ENCODE measurements at regions of chr17 and their contacts with region 1.

Region 1: DNA sequence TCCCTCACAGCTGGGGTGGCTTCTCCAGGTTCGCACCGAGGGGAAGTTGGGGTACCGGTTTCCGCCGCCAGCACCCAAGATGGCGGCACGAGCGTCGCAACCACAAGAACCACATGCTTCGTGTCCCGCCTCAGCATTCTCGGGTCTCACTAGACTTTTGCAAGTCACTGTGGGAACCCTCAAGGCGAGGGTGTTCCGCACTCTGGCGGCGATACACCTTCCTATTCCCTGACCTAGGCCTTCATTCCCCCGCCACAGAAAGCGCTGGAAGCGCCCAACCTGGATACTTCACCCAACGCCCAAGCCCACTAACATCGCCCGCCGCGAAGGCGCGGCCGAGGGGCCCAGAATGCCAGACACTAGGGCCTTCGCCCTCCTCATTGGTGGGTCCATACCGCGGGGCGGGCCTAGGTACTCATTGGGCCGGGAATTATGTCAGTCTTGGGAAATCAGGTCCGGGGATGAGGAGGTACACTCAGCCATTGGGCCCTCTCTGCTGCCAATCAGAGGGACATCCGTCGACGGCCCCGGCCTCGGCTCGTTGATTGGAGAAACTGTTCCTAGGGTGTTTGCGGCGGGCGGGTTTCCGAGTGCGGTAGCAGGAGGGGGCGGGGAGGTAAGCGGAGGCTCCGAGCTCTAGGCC is at the start of gene NFE2L1:
- DNase-seq: peak; percentile 100
- H3K4me3 ChIP-seq: peak within 1 kb of the TSS; percentile 84
- H3K4me3 Mint-ChIP-seq: peak within 1 kb of the TSS; percentile 87
- H3K27ac Mint-ChIP-seq: peak within 1 kb of the TSS; percentile 100
- H3K4me1 ChIP-seq: peaks cover 22% of the 10 kb centered on the region
- H3K4me1 Mint-ChIP-seq: peaks cover 30% of the 10 kb centered on the region
- H3K27me3 ChIP-seq: no peaks in the 10 kb centered on the region
- H3K27me3 Mint-ChIP-seq: no peaks in the 10 kb centered on the region
- CTCF ChIP-seq: no peak
- total RNA-seq, gene NFE2L1: 322 and 356 TPM in 2 replicates

Region 2: GRCh38 chr17:47821424-47822391 is 226.2 kb before region 1 on chr17 and contains the start of gene OSBPL7:
- CTCF ChIA-PET with region 1: no interaction called
- POLR2A ChIA-PET with region 1: no interaction called
- intact Hi-C with region 1: no loop called
- DNase-seq: peak; percentile 92 to 95
- H3K4me3 ChIP-seq: peak within 1 kb of the TSS; percentile 75
- H3K4me3 Mint-ChIP-seq: peak within 1 kb of the TSS; percentile 98
- H3K27ac Mint-ChIP-seq: peak within 1 kb of the TSS; percentile 92
- H3K4me1 ChIP-seq: peaks cover 9% of the 10 kb centered on the region
- H3K4me1 Mint-ChIP-seq: peaks cover 18% of the 10 kb centered on the region
- H3K27me3 ChIP-seq: no peaks in the 10 kb centered on the region
- H3K27me3 Mint-ChIP-seq: no peaks in the 10 kb centered on the region
- CTCF ChIP-seq: peak in 1 of 2 experiments; percentile 86
- total RNA-seq, gene OSBPL7: 46.8 and 48.3 TPM in 2 replicates

Region 3: DNA sequence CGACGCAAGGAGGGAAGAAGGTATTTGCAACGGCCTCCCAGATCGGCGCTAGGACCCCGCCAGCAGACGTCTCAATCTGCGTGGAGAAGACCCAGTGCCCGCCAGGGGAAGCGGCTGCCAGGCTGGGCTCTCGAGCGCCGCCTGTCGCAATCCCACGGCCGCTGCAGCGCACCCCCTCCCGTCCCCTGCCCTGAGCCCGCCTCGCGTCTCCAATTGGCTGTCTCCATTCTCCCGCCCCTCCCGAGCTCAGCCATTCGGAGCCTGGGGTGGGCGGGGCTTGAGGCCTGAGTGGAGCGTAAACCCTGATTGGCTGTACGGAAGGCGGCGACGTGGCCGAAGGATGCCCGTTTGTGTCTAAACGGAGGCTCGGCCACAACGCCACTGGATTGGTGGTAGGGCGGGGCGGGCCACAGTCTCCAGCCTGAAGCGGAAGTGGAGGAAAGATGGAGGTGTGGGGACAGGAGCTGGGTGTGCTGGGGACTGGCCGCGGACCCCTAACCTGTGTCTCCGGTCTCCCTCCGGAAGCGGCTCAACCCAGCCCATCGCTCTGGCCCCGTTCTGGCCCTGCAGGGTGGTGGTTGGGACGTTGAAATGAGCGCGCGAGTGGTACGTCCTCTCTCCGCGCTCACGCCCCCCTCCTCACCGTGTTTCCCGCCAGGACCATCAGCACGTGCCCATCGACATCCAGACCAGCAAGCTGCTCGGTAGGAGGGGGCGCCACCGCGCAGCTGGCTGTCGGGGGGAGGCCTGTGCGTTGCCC is 77.0 kb before region 1 on chr17 and contains the start of gene CDK5RAP3:
- CTCF ChIA-PET with region 1: interaction called, 21 read pairs
- POLR2A ChIA-PET with region 1: interaction called, 37 read pairs
- intact Hi-C with region 1: loop called (anchors 2 kb)
- DNase-seq: peak; percentile 100
- H3K4me3 ChIP-seq: peak within 1 kb of the TSS; percentile 72
- H3K4me3 Mint-ChIP-seq: peak within 1 kb of the TSS; percentile 94
- H3K27ac Mint-ChIP-seq: peak within 1 kb of the TSS; percentile 92
- H3K4me1 ChIP-seq: peaks cover 40% of the 10 kb centered on the region
- H3K4me1 Mint-ChIP-seq: peaks cover 30% of the 10 kb centered on the region
- H3K27me3 ChIP-seq: no peaks in the 10 kb centered on the region
- H3K27me3 Mint-ChIP-seq: no peaks in the 10 kb centered on the region
- CTCF ChIP-seq: peak; percentile 99 to 100
- total RNA-seq, gene CDK5RAP3: 425 and 427 TPM in 2 replicates

Region 4: DNA sequence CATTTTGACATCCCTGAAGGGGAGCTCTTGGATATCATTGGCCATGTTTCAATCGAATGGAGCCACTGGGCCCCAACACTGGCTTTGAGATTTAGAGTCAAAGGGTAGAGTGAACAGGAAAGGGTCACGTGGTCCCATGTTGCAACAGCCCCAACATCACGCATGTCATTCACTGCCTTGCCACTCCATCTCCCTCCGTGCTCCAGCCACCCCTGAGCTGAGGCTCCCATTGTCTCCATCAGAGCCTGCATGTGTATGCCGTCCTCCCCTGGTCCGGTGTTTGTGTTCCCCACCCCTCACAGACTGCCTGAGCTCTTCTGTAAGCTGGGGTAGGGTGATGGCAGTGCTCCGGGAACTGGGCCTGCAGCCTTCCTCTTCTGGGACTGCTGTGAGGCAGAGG is 12.4 kb after region 1 on chr17:
- CTCF ChIA-PET with region 1: interaction called, 17 read pairs
- POLR2A ChIA-PET with region 1: interaction called, 27 read pairs
- intact Hi-C with region 1: loop called (anchors 1 kb)
- DNase-seq: no peak
- H3K4me3 ChIP-seq: no peak overlapping the region
- H3K4me3 Mint-ChIP-seq: peak overlapping the region; percentile 13
- H3K27ac Mint-ChIP-seq: peak overlapping the region; percentile 65
- H3K4me1 ChIP-seq: peaks cover 8% of the 10 kb centered on the region
- H3K4me1 Mint-ChIP-seq: peaks cover 43% of the 10 kb centered on the region
- H3K27me3 ChIP-seq: no peaks in the 10 kb centered on the region
- H3K27me3 Mint-ChIP-seq: no peaks in the 10 kb centered on the region
- CTCF ChIP-seq: no peak

Region 5: DNA sequence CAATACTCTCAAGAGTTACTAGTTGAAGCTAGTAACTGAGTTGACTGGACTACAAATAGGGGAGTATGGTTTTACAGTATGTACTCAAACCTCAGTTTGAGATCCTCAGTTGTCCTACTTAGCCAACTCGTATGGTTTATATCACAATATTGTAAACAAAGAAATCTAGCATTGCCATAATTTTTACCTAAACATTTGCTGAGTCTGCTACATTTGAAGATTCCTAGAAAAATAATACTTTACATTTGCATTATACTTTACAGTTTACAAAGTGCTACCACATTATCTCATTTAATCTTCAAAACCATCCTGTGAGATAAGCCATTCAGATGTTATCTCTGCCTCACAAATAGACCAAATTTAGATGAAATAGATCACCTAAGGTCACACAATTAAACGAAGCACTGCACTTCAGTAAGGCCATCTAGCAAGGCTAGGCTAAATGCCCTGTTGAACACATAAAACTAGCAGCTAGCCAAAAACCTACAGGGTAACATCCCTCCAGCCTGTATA is 37.1 kb after region 1 on chr17:
- CTCF ChIA-PET with region 1: interaction called, 11 read pairs
- POLR2A ChIA-PET with region 1: interaction called, 4 read pairs
- intact Hi-C with region 1: no loop called
- DNase-seq: no peak
- H3K4me3 ChIP-seq: no peak overlapping the region
- H3K4me3 Mint-ChIP-seq: no peak overlapping the region
- H3K27ac Mint-ChIP-seq: no peak overlapping the region
- H3K4me1 ChIP-seq: peaks cover 7% of the 10 kb centered on the region; the same call in 1 of the 2 replicates
- H3K4me1 Mint-ChIP-seq: no peaks in the 10 kb centered on the region
- H3K27me3 ChIP-seq: no peaks in the 10 kb centered on the region
- H3K27me3 Mint-ChIP-seq: no peaks in the 10 kb centered on the region
- CTCF ChIP-seq: no peak

Region 6: GRCh38 chr17:48123111-48123510 is 75.2 kb after region 1 on chr17:
- CTCF ChIA-PET with region 1: no interaction called
- POLR2A ChIA-PET with region 1: interaction called, 11 read pairs
- intact Hi-C with region 1: no loop called
- DNase-seq: no peak
- H3K4me3 ChIP-seq: no peak overlapping the region
- H3K4me3 Mint-ChIP-seq: no peak overlapping the region
- H3K27ac Mint-ChIP-seq: no peak overlapping the region
- H3K4me1 ChIP-seq: no peaks in the 10 kb centered on the region
- H3K4me1 Mint-ChIP-seq: no peaks in the 10 kb centered on the region
- H3K27me3 ChIP-seq: no peaks in the 10 kb centered on the region
- H3K27me3 Mint-ChIP-seq: no peaks in the 10 kb centered on the region
- CTCF ChIP-seq: no peak

Region 7: DNA sequence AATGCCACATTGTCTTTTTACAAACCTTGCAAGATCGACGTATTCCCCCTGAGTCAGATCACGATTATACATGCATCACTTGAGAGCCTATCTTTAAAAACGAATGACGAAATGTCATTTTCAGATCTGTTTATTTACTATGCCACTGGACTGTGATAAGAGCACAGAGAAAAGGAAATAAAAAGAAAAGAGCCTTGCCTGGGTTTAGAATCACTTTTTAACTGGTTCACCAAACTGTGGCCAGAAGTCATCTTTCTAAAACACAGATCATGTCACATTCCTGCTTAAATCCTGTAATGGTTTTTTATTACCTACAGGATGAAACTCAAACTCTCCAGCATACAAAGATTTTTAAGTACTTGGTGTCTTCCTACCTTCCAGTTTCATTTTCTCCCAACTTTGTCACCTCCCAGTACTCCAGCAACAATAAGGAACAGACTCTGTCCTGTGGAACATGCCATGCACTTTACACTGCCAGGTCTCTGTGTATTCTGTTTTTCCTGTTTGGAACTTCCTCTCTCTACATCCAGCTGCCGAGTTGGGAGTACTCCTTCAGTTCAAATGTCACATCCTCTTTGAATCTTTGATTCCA is 151.2 kb after region 1 on chr17:
- CTCF ChIA-PET with region 1: no interaction called
- POLR2A ChIA-PET with region 1: no interaction called
- intact Hi-C with region 1: no loop called
- DNase-seq: no peak
- H3K4me3 ChIP-seq: no peak overlapping the region
- H3K4me3 Mint-ChIP-seq: peak overlapping the region; percentile 0
- H3K27ac Mint-ChIP-seq: no peak overlapping the region
- H3K4me1 ChIP-seq: peaks cover 17% of the 10 kb centered on the region
- H3K4me1 Mint-ChIP-seq: peaks cover 21% of the 10 kb centered on the region
- H3K27me3 ChIP-seq: no peaks in the 10 kb centered on the region
- H3K27me3 Mint-ChIP-seq: no peaks in the 10 kb centered on the region
- CTCF ChIP-seq: no peak

Measured in Caco-2 (cell line).